ENCODE measurements at regions of chr5 and their contacts with region 1.

Region 1: GRCh38 chr5:143033535-143034250 is 263.5 kb downstream of the ARHGAP26 start:
- DNase-seq: no peak
- ATAC-seq: no peak
- H3K4me3 ChIP-seq: no peak overlapping the region
- H3K27ac ChIP-seq: no peak overlapping the region
- H3K4me1 ChIP-seq: peaks cover 23% of the 10 kb centered on the region
- H3K27me3 ChIP-seq: no peaks in the 10 kb centered on the region
- CTCF ChIP-seq: no peak
- EP300 ChIP-seq: no peak
- POLR2A ChIP-seq: no peak
- RAD21 ChIP-seq: no peak

Region 2: DNA sequence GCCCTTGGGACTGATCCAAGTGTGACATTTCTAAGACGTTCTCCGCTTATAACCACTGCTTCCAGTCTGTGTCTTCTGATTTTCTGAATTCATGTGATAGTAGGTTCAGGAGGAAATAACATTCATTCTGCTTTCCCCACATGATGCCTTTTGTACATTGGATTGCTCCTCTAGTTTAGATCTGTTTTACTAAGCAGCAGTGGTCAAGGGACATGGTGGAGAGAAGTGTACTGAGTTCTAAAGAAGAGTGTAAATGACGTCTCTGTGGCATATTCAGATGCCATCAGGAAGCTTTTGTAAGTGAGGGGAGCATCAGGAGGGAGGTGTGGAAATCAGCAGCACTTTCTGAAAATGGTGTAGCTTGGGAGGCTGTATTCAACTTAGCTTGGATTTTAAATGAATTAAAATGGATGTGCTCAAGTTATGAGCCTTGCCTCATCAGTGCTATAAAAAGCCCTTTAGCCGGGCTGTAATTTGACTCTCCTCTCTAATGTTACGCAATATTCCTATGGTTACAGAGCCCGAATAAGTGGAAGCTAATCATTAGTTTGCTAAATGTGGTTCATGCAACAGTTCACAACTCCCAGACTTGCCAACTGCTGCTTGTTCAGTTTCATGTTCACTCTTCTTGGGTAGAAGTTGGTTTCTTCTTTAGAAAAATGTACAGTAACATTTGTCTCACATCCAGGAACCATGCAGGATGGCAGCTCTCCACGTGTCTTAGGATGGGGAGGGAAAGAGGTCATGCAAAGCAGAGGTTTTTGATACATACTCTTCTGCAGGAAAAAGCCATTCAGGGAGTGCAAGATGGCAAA is 17.8 kb after region 1 on chr5:
- CTCF ChIA-PET with region 1: interaction called, 14 read pairs
- POLR2A ChIA-PET with region 1: interaction called, 62 read pairs
- RAD21 ChIA-PET with region 1: interaction called, 337 read pairs
- SMC1A ChIA-PET with region 1: interaction called, 441 read pairs
- in situ Hi-C with region 1: no loop called
- intact Hi-C with region 1: no loop called
- DNase-seq: no peak
- ATAC-seq: peak; percentile 10
- H3K4me3 ChIP-seq: no peak overlapping the region
- H3K27ac ChIP-seq: no peak overlapping the region; the same call in 1 of the 2 replicates
- H3K4me1 ChIP-seq: peaks cover 38% of the 10 kb centered on the region
- H3K27me3 ChIP-seq: no peaks in the 10 kb centered on the region
- CTCF ChIP-seq: no peak
- EP300 ChIP-seq: no peak
- POLR2A ChIP-seq: no peak
- RAD21 ChIP-seq: no peak

Region 3: DNA sequence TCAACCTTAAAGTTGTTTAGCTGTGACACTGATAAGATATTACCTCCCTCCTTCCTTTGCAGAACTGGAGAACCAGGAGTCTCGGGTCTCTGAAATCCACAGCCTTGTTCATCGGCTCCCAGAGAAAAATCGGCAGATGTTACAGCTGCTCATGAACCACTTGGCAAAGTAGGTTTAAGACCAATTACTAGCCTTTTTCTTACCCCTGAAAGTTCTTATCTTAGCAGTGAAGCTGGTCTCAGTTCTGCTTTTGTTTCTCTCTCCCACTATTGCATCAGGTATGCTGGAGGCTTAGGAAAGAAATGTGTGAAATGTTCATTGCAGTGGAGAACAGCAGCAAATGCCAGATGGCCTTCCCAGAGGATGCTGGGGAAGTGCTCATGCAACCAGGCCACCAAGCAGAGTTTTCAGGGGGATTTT is 23.9 kb after region 1 on chr5:
- CTCF ChIA-PET with region 1: interaction called, 9 read pairs
- POLR2A ChIA-PET with region 1: interaction called, 62 read pairs
- RAD21 ChIA-PET with region 1: interaction called, 337 read pairs
- SMC1A ChIA-PET with region 1: interaction called, 441 read pairs
- in situ Hi-C with region 1: no loop called
- intact Hi-C with region 1: no loop called
- DNase-seq: peak; percentile 85
- ATAC-seq: peak; percentile 59
- H3K4me3 ChIP-seq: peak overlapping the region; percentile 77
- H3K27ac ChIP-seq: peak overlapping the region; percentile 100
- H3K4me1 ChIP-seq: peaks cover 56% of the 10 kb centered on the region
- H3K27me3 ChIP-seq: no peaks in the 10 kb centered on the region
- CTCF ChIP-seq: no peak
- EP300 ChIP-seq: peak; percentile 77 to 89; a peak in 3 of 4 replicates
- POLR2A ChIP-seq: peak; percentile 54; the same call in 1 of the 2 replicates
- RAD21 ChIP-seq: peak; percentile 36; the same call in 1 of the 2 replicates

Region 4: DNA sequence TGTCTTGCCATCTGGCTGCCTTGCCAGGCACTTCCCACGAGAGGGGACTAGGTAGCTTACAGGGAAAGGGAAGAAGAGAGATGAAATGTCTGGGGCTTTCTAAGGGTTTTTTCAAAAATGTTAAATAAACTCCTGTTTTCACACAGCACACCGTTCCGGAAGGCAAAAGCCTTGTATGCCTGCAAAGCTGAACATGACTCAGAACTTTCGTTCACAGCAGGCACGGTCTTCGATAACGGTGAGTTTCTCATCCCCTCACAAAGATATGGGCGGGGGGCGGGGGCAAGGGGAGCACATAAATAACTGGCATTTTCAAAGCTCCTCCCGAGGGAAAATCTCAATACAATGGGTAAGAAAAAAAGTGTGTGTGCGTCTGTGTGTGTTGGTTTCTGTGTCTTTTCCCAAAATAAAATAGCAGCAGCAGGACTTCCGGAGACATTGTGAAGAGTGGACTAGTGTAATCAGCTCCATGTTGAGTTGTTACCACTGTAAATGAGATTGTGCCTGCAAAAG is 180.2 kb after region 1 on chr5:
- CTCF ChIA-PET with region 1: interaction called, 8 read pairs
- POLR2A ChIA-PET with region 1: interaction called, 6 read pairs
- RAD21 ChIA-PET with region 1: interaction called, 9 read pairs
- SMC1A ChIA-PET with region 1: interaction called, 47 read pairs
- in situ Hi-C with region 1: no loop called
- intact Hi-C with region 1: no loop called
- DNase-seq: peak; percentile 97
- ATAC-seq: peak; percentile 68
- H3K4me3 ChIP-seq: peak overlapping the region; percentile 6; the same call in 1 of the 2 replicates
- H3K27ac ChIP-seq: peak overlapping the region; percentile 100
- H3K4me1 ChIP-seq: peaks cover 76% of the 10 kb centered on the region
- H3K27me3 ChIP-seq: no peaks in the 10 kb centered on the region
- CTCF ChIP-seq: peak; percentile 38 to 61 (median 47); a peak in 5 of 6 replicates
- EP300 ChIP-seq: peak; percentile 73 to 82
- POLR2A ChIP-seq: peak; percentile 45
- RAD21 ChIP-seq: peak; percentile 76